Naive thymus-derived CD4-positive, alpha-beta T cell (primary cell): ENCODE measurements at regions of chr3 and their contacts with region 1.

Region 1: DNA sequence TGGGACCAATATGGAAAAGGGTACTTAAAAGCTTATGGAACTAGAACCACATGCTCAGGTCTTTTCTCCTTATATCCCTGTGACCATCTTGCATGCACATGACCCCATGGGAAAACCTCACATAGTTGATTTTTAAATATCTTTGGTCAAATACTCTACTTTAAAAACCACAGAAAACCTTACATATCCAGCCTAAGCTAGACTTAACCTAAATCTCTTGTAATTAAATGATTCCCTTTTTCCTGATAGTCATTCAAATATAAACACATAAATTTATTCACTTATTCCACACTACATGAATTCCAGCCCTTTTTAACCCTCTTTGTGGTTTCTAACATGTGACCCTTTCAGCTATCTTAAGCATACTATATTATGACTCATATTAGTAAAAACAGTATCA is 46.8 kb downstream of the DNAJC13 start:
- DNase-seq: no peak
- ATAC-seq: no peak
- H3K4me3 ChIP-seq: no peak overlapping the region
- H3K4me3 Mint-ChIP-seq: no peak overlapping the region
- H3K27ac ChIP-seq: no peak overlapping the region
- H3K27ac Mint-ChIP-seq: peak overlapping the region in 1 of 9 donors; percentile 33
- H3K4me1 ChIP-seq: no peaks in the 10 kb centered on the region
- H3K4me1 Mint-ChIP-seq: no peaks in the 10 kb centered on the region
- H3K27me3 ChIP-seq: no peaks in the 10 kb centered on the region
- H3K27me3 Mint-ChIP-seq: no peaks in the 10 kb centered on the region

Region 2: DNA sequence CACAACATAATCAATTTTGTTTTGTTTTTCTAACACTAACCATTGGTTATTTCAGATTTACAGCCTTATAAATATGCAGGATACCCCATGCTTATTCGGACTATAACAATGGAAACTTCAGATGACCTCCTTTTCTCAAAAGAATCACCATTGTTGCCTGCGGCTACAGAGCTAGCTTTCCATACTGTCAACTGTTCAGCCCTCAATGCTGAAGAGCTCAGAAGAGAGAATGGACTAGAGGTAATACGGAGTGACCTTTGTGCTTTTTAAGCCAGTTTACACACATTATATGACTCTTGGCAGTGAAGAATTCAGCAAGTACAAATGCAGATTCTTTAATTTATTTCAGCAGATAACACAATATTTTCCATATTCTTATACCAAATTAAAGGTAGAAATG is 35.0 kb after region 1 on chr3:
- CTCF ChIA-PET with region 1: no interaction called
- POLR2A ChIA-PET with region 1: no interaction called
- intact Hi-C with region 1: loop called in 1 of 2 experiments (anchors 5 kb)
- DNase-seq: no peak
- ATAC-seq: no peak
- H3K4me3 ChIP-seq: no peak overlapping the region
- H3K4me3 Mint-ChIP-seq: no peak overlapping the region
- H3K27ac ChIP-seq: no peak overlapping the region
- H3K27ac Mint-ChIP-seq: no peak overlapping the region
- H3K4me1 ChIP-seq: no peaks in the 10 kb centered on the region
- H3K4me1 Mint-ChIP-seq: peaks cover 0 to 2% (median 0%) of the 10 kb centered on the region in 7 donors
- H3K27me3 ChIP-seq: no peaks in the 10 kb centered on the region
- H3K27me3 Mint-ChIP-seq: no peaks in the 10 kb centered on the region

Region 3: GRCh38 chr3:134453631-134454030 is 1989.6 kb after region 1 on chr3:
- CTCF ChIA-PET with region 1: no interaction called
- POLR2A ChIA-PET with region 1: no interaction called
- intact Hi-C with region 1: no loop called
- DNase-seq: no peak
- ATAC-seq: no peak
- H3K4me3 ChIP-seq: no peak overlapping the region
- H3K4me3 Mint-ChIP-seq: no peak overlapping the region
- H3K27ac ChIP-seq: no peak overlapping the region
- H3K27ac Mint-ChIP-seq: no peak overlapping the region
- H3K4me1 ChIP-seq: no peaks in the 10 kb centered on the region
- H3K4me1 Mint-ChIP-seq: peaks cover 0 to 5% (median 0%) of the 10 kb centered on the region in 7 donors
- H3K27me3 ChIP-seq: no peaks in the 10 kb centered on the region
- H3K27me3 Mint-ChIP-seq: peaks cover 13 to 35% (median 19%) of the 10 kb centered on the region in 5 donors